Vagina (tissue), 2 donors: ENCODE measurements at regions of chr9 and their contacts with region 1.

Region 1: GRCh38 chr9:35907711-35908503 is 1.4 kb upstream of the SPAAR start:
- DNase-seq: no peak
- H3K4me3 ChIP-seq: peak overlapping the region; percentile 13 to 21
- H3K27ac ChIP-seq: peak overlapping the region; percentile 97
- H3K4me1 ChIP-seq: peaks cover 79% of the 10 kb centered on the region
- H3K27me3 ChIP-seq: no peaks in the 10 kb centered on the region
- CTCF ChIP-seq: no peak
- POLR2A ChIP-seq: no peak

Region 2: GRCh38 chr9:35945341-35946018 is 37.6 kb after region 1 on chr9:
- intact Hi-C with region 1: loop called (anchors 5 kb)
- DNase-seq: no peak
- H3K4me3 ChIP-seq: no peak overlapping the region
- H3K27ac ChIP-seq: no peak overlapping the region
- H3K4me1 ChIP-seq: peaks cover 7% of the 10 kb centered on the region
- H3K27me3 ChIP-seq: no peaks in the 10 kb centered on the region
- CTCF ChIP-seq: peak; percentile 77 to 86 (median 82)
- POLR2A ChIP-seq: no peak